PC-3 (cell line): ENCODE measurements at regions of chr19 and their contacts with region 1.

Region 1: DNA sequence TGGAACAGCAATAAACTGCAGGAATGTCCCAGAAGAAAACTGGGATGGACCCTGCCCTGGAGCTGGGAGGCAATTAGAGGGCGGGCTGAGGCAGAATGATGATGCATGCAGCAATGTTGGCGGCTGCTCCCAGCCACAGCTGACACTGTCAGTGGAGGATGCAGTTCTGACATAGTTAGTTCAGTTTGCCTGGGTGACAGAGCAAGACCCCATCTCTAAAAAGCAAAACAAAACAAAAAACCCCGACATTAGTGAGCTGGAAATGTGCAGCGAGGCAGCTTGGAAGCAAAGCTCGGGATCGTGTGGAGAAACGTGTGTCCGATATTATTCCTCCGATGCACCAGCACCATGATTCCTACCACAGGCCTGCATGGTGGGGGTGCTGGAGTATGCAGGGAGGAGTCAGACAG is 110.1 kb upstream of the UQCRFS1 start:
- DNase-seq: no peak
- ATAC-seq: no peak
- H3K4me3 ChIP-seq: no peak overlapping the region
- H3K27ac ChIP-seq: no peak overlapping the region
- H3K4me1 ChIP-seq: no peaks in the 10 kb centered on the region
- H3K27me3 ChIP-seq: no peaks in the 10 kb centered on the region
- CTCF ChIP-seq: no peak

Region 2: GRCh38 chr19:29268721-29269393 is 54.2 kb before region 1 on chr19:
- CTCF ChIA-PET with region 1: no interaction called
- POLR2A ChIA-PET with region 1: no interaction called
- intact Hi-C with region 1: no loop called
- DNase-seq: no peak
- ATAC-seq: no peak
- H3K4me3 ChIP-seq: no peak overlapping the region
- H3K27ac ChIP-seq: no peak overlapping the region
- H3K4me1 ChIP-seq: no peaks in the 10 kb centered on the region
- H3K27me3 ChIP-seq: 0 out of 2 replicates have a peak, but pooled peaks cover 3% of the 10 kb centered on the region
- CTCF ChIP-seq: no peak

Region 3: DNA sequence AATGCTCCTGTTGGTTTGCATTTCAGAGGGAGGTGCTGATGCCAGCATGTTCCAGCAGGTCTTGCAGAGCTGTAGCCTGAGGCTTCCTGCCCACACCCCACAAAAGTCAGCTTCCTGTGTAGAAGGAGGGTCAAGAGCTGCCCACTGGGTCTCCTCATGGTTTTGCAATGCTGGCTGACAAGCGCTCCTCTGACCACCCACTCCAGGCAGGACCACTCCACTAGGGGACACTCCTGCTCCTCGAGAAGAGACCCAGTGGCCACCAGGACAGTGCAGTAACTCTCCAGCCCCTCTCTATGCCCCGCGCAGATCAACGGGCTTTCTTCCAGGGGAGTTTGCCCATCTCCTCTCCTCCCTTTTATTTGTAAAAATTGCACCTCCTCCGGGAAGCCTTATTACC is 37.1 kb before region 1 on chr19:
- CTCF ChIA-PET with region 1: no interaction called
- POLR2A ChIA-PET with region 1: no interaction called
- intact Hi-C with region 1: no loop called
- DNase-seq: no peak
- ATAC-seq: no peak
- H3K4me3 ChIP-seq: no peak overlapping the region
- H3K27ac ChIP-seq: no peak overlapping the region
- H3K4me1 ChIP-seq: no peaks in the 10 kb centered on the region
- H3K27me3 ChIP-seq: no peaks in the 10 kb centered on the region
- CTCF ChIP-seq: no peak

Region 4: DNA sequence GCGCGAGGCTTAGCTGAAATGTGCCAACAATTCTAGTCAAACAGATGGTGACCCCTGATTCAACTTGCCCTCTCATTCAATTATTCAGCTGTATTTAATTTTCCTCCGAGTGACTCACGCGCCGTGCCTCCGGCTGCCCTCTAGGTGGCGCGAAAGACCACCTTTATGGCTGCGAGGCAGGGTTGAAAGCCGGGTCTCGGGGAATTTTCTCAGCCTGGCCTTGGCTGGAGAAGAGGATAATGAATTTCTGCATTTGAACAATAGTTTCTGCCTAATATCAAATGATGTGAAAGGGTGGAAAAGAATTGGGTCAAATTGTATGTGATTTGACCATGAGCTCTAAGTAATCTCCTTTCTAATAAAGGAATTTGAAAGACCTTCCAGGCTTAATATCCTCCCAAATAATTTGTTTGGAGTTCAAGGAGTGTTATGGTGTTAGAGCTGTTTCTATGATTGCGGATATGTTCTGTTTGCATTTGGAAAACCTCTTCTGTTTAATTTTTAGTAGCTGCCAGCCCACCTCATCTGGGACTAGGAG is 1360.0 kb after region 1 on chr19:
- CTCF ChIA-PET with region 1: interaction called, 15 read pairs
- POLR2A ChIA-PET with region 1: no interaction called
- intact Hi-C with region 1: no loop called
- DNase-seq: peak; percentile 70
- ATAC-seq: peak; percentile 62
- H3K4me3 ChIP-seq: no peak overlapping the region
- H3K27ac ChIP-seq: no peak overlapping the region
- H3K4me1 ChIP-seq: 0 out of 2 replicates have a peak, but pooled peaks cover 3% of the 10 kb centered on the region
- H3K27me3 ChIP-seq: 0 out of 2 replicates have a peak, but pooled peaks cover 1% of the 10 kb centered on the region
- CTCF ChIP-seq: peak; percentile 84